A549 (cell line): ENCODE measurements at regions of chr6 and their contacts with region 1.

Region 1: GRCh38 chr6:7276199-7276524 is 36.8 kb downstream of the SSR1 start:
- DNase-seq: no peak
- ATAC-seq: no peak
- H3K4me3 ChIP-seq: no peak overlapping the region
- H3K27ac ChIP-seq: no peak overlapping the region
- H3K4me1 ChIP-seq: no peaks in the 10 kb centered on the region
- CTCF ChIP-seq: no peak
- EP300 ChIP-seq: no peak
- POLR2A ChIP-seq: no peak
- RAD21 ChIP-seq: 0 out of 5 replicates have a peak, but pooled peaks of 1 of the 2 experiments have one; percentile 7

Region 2: GRCh38 chr6:7051233-7052114 is 224.7 kb before region 1 on chr6:
- CTCF ChIA-PET with region 1: no interaction called
- POLR2A ChIA-PET with region 1: no interaction called
- DNase-seq: no peak
- ATAC-seq: peak; percentile 71 to 74
- H3K4me3 ChIP-seq: peak overlapping the region; percentile 44
- H3K27ac ChIP-seq: peak overlapping the region; percentile 70 to 88
- H3K4me1 ChIP-seq: peaks cover 12% of the 10 kb centered on the region; the same call in 2 of the 3 replicates
- CTCF ChIP-seq: no peak
- EP300 ChIP-seq: no peak
- POLR2A ChIP-seq: no peak
- RAD21 ChIP-seq: no peak

Region 3: GRCh38 chr6:7261032-7261841 is 14.9 kb before region 1 on chr6:
- CTCF ChIA-PET with region 1: interaction called, 21 read pairs
- POLR2A ChIA-PET with region 1: no interaction called
- DNase-seq: peak; percentile 75 to 95
- ATAC-seq: peak; percentile 94 to 99
- H3K4me3 ChIP-seq: peak overlapping the region; percentile 56
- H3K27ac ChIP-seq: peak overlapping the region; percentile 71 to 89
- H3K4me1 ChIP-seq: peaks cover 13% of the 10 kb centered on the region
- CTCF ChIP-seq: no peak
- EP300 ChIP-seq: no peak
- POLR2A ChIP-seq: peak; percentile 67
- RAD21 ChIP-seq: no peak

Region 4: DNA sequence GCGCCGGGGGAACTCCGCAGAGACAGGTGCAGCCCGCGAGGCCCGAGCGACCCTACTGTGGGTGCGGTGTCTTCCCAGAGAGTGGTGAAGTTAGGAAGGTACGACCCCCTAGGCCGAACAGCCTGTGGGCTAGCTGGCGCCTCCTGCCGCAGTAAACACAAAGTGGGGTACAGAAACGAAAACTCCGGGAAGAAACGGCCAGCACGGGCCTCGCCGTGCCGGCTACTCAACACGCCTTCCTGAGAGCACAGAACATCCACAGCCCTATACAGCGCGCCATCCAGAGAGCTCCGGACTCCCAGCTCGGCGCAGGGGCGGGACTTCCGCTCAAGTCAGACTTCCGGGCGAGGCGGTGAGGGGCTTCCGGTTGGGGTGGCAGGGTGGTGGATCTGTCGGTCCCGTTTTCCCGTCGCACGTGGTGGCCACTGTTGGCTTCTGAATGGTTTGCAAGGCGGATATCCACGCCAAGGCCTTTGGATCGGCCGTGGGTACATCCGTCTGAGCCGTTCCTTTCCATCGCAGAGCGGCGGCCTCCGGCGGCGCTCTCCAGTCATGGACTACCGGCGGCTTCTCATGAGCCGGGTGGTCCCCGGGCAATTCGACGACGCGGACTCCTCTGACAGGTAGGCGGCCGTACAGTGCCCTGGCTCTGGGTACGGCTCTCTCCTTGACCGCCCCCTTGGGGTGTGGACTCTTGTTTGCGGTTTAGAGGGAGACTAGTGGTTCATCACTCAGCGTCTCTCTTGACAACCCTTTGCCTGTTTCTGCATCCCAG is 113.5 kb after region 1 on chr6 and contains the starts of genes CAGE1 and RIOK1:
- CTCF ChIA-PET with region 1: interaction called, 10 read pairs
- POLR2A ChIA-PET with region 1: no interaction called
- DNase-seq: peak; percentile 89 to 95
- ATAC-seq: peak; percentile 99 to 100
- H3K4me3 ChIP-seq: peak within 1 kb of the TSS; percentile 71
- H3K27ac ChIP-seq: peak within 1 kb of the TSS; percentile 92 to 99
- H3K4me1 ChIP-seq: peaks cover 24% of the 10 kb centered on the region
- CTCF ChIP-seq: no peak
- EP300 ChIP-seq: no peak
- POLR2A ChIP-seq: peak; percentile 65
- RAD21 ChIP-seq: no peak
- polyA plus RNA-seq, gene CAGE1: 0.12 TPM in 1 of 2 replicates, not detected in the other
- polyA plus RNA-seq, gene RIOK1: 20.4 and 24.6 TPM in 2 replicates

Region 5: DNA sequence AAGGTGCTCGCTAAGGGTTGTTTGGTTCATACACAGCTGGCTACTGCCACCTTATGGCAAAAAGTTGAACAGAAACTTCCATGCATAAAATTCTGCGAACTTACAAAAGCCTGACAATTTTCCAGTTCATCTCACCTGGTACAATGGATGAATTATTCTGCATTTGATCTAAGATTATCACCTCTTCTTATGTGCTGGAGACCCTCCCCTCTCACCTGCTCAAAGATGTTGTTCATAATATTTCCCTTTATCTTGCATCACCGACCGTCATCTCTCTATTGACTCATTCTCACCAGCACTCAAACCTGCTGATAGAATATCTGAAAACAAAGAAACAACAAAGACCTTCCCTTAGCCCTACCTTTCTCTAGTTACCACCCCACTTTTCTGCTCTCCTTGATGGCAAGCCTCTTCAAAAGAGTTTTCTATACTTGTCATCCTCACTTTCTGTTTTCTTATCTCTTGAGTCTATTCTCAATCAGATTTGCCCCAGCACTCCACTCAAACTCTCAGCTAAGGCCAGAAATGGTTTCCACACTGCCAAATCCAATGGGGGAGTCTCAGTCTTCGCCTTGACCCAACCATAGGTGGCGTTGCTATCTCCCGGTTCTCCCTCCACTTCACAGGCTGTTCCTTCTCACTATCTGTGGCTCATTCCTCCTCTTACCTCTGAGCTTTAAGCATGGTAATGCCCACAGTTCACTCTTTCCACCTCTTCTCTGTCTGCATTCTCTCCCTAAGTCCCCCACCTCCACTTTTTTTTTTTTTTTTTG is 339.6 kb after region 1 on chr6:
- CTCF ChIA-PET with region 1: interaction called, 27 read pairs
- POLR2A ChIA-PET with region 1: no interaction called
- DNase-seq: peak; percentile 18 to 57
- ATAC-seq: peak; percentile 72 to 80; a peak in 5 of 6 replicates
- H3K4me3 ChIP-seq: no peak overlapping the region
- H3K27ac ChIP-seq: peak overlapping the region; percentile 43 to 63
- H3K4me1 ChIP-seq: peaks cover 10% of the 10 kb centered on the region; the same call in 1 of the 3 replicates
- CTCF ChIP-seq: peak; percentile 77
- EP300 ChIP-seq: no peak
- POLR2A ChIP-seq: no peak
- RAD21 ChIP-seq: peak; percentile 83 to 84